ENCODE measurements at regions of chr3 and their contacts with region 1.

Region 1: DNA sequence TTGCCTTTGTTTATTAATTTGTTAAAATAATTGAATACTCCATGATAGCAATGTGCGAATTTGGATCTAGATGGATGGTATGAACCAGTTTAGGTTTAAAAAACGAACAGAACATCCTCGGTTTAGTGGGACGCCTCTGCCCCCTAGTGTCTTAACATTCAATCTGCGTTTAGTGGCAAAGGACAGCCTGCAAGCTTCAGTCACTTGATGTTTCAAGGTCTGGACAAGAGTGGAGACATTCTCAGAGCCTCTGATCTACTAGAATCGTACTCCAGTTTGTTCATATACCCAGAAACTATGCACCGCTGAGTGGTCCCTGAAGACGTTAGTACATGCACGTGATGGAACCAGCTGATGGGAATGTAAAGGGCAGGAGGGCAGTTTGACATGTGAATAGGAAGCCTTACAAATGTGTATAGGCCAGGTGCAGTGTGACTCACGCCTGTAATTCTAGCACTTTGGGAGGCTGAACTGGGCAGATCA is 17.8 kb upstream of the ATP13A4 start:
- DNase-seq: peak; percentile 69
- H3K4me3 Mint-ChIP-seq: no peak overlapping the region
- H3K27ac Mint-ChIP-seq: no peak overlapping the region
- H3K4me1 Mint-ChIP-seq: no peaks in the 10 kb centered on the region
- H3K27me3 Mint-ChIP-seq: no peaks in the 10 kb centered on the region

Region 2: GRCh38 chr3:192467230-192468140 is 1105.0 kb before region 1 on chr3:
- CTCF ChIA-PET with region 1: interaction called, 4 read pairs
- intact Hi-C with region 1: loop called (anchors 1 kb)
- DNase-seq: peak; percentile 68
- H3K4me3 Mint-ChIP-seq: no peak overlapping the region
- H3K27ac Mint-ChIP-seq: no peak overlapping the region
- H3K4me1 Mint-ChIP-seq: no peaks in the 10 kb centered on the region
- H3K27me3 Mint-ChIP-seq: peaks cover 16% of the 10 kb centered on the region

Region 3: GRCh38 chr3:193040836-193041672 is 531.4 kb before region 1 on chr3:
- CTCF ChIA-PET with region 1: interaction called, 4 read pairs
- intact Hi-C with region 1: loop called (anchors 5 kb)
- DNase-seq: peak; percentile 9
- H3K4me3 Mint-ChIP-seq: no peak overlapping the region
- H3K27ac Mint-ChIP-seq: no peak overlapping the region
- H3K4me1 Mint-ChIP-seq: no peaks in the 10 kb centered on the region
- H3K27me3 Mint-ChIP-seq: no peaks in the 10 kb centered on the region

Region 4: GRCh38 chr3:193190146-193190786 is 382.2 kb before region 1 on chr3:
- CTCF ChIA-PET with region 1: no interaction called
- intact Hi-C with region 1: loop called (anchors 2 kb)
- DNase-seq: peak; percentile 25
- H3K4me3 Mint-ChIP-seq: no peak overlapping the region
- H3K27ac Mint-ChIP-seq: no peak overlapping the region
- H3K4me1 Mint-ChIP-seq: no peaks in the 10 kb centered on the region
- H3K27me3 Mint-ChIP-seq: peaks cover 2% of the 10 kb centered on the region

Region 5: DNA sequence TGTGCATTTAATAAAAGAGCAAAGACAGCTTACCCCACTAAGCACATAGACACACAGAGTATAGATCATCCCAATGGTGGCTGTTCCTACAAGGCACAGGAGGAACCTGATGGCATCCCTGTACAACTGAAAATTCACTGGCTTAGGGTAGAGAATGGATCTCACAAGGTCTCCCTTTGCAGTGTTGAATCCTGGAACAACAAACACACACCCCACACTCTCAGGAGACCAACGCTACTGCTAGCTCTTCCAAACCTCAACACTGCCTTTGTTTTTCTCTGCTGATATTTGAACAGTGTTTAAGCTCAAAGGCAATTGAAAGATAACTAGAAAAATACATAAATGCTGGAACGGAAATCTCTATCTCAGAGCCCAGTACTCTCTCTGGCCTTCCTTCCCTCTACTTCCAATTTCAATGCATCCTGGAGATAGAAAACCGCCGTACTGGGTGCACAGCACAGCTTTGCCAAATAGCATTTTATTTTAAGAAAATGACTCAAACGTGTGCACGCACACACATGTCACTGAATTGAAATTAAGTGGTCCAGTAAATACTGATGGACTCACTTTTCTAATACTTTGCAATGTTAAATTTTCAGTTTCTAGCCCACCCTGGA is 106.4 kb before region 1 on chr3:
- CTCF ChIA-PET with region 1: interaction called, 16 read pairs
- intact Hi-C with region 1: loop called (anchors 1 kb)
- DNase-seq: no peak
- H3K4me3 Mint-ChIP-seq: no peak overlapping the region
- H3K27ac Mint-ChIP-seq: no peak overlapping the region
- H3K4me1 Mint-ChIP-seq: no peaks in the 10 kb centered on the region
- H3K27me3 Mint-ChIP-seq: no peaks in the 10 kb centered on the region

Measured in activated naive CD4-positive, alpha-beta T cell treated with anti-CD3 and anti-CD28 coated beads for 36 hours (primary cell).